ENCODE measurements at regions of chr5 and their contacts with region 1.

Region 1: DNA sequence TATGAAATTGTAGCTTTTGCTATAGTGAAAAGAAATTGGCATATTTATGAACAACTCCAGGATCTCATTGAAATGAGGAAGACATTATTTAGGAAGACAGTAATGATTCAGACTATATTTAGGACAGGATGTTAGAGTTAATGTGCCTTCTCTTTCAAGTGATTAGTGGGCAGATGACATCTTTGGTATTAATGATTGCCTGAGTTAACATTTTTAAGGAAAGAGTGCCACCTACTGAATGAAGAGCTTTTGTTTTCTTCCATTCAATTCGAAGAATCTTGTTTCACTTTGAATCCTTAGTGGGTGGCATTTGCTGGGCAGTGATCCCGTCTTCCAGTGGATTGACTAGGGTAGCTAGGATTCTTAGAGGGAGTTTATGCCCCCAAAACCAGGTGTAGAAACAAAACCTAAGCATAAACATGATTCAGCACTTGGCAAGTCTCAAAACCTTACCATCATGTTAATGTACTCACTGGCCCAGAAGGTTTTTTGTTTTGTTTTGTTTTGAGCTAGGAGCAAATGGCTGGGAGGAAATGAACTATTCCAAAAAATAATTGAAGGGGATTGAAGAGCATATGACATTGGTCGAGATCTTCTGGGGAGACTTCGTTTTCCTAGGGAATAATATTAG is 23.2 kb downstream of the MAP3K1 start:
- DNase-seq: no peak
- ATAC-seq: peak; percentile 67
- H3K4me3 Mint-ChIP-seq: peak overlapping the region; percentile 37
- H3K27ac Mint-ChIP-seq: peak overlapping the region; percentile 68
- H3K4me1 Mint-ChIP-seq: peaks cover 84% of the 10 kb centered on the region
- H3K27me3 Mint-ChIP-seq: no peaks in the 10 kb centered on the region

Region 2: GRCh38 chr5:55969956-55970355 is 868.6 kb before region 1 on chr5:
- CTCF ChIA-PET with region 1: no interaction called
- POLR2A ChIA-PET with region 1: interaction called, 3 read pairs
- intact Hi-C with region 1: loop called in 1 of 2 experiments (anchors 10 kb)
- DNase-seq: no peak
- ATAC-seq: no peak
- H3K4me3 Mint-ChIP-seq: no peak overlapping the region
- H3K27ac Mint-ChIP-seq: peak overlapping the region; percentile 88
- H3K4me1 Mint-ChIP-seq: peaks cover 67% of the 10 kb centered on the region
- H3K27me3 Mint-ChIP-seq: no peaks in the 10 kb centered on the region

Region 3: DNA sequence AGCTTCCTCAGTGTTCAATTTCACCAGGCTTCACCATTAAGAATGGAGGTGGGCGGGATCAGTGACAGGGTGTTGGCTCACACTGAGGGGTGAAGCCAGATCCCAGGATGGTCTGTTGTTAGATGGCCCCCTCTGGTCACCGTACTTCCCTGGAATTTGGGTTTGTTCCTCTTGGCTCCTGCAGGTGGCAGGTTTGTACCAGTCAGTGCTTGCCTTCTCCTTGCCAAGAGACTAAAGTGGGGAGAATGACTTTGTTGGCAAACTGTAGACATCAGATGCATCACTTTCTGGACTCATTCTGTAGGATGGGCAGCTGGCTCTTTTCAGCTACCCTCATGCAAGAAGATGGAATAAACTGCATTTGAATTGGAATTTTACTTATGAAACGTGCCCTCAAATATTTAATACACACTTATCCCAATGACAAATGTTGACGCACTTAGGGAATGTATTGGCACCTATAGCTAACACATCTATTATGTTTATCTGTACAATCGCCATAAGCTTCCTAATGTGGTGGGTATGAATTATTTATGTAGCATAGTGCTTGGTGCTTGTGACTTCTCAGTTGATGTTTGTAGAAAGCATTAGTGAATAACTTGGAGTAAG is 574.0 kb before region 1 on chr5:
- CTCF ChIA-PET with region 1: interaction called, 127 read pairs
- POLR2A ChIA-PET with region 1: no interaction called
- intact Hi-C with region 1: no loop called
- DNase-seq: peak; percentile 51
- ATAC-seq: peak; percentile 42
- H3K4me3 Mint-ChIP-seq: no peak overlapping the region
- H3K27ac Mint-ChIP-seq: no peak overlapping the region
- H3K4me1 Mint-ChIP-seq: peaks cover 2% of the 10 kb centered on the region
- H3K27me3 Mint-ChIP-seq: no peaks in the 10 kb centered on the region

Region 4: DNA sequence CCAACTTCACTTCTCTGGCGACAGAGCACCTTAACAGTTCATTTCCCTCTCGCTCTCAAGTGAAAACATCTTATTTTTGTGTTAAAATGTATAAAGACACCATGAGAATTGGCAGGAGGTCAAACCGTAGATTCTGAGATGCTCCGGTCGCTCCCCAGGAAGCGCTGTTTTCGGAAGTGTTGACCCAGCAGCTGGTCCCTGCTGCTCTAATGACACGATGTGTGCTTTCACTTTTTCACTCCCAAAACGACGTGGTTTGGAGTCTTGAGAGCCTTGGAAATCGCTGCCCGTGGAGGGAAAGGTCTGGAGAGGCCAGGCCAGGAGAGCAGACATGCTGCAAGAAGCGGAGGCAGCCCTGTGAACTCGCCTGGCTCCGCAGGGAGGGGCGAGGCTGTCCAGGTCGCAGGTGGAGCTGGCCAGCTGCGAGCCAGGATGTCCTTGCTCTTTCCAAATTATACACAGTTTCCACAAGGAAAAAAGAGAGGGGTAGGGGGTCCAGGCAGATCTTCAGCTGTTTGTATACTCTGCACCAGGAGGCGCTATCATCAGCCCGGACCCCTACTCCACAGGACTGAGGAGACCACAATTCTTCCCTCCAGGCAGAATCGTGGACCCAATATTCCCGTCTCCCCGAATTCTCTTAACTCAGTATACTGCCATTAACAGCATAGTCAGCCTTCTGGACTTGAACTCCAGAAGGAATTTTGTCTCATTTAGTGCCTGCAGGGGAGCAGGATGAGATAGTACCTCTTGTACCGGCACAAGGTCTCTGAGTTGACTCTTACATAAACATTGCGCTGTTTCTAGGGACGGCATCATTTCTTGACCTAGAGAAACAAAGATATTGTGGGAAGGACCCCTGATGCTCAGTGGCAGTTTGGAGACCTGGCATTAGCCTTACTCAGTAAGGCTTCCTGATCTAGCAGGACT is 356.8 kb before region 1 on chr5:
- CTCF ChIA-PET with region 1: interaction called, 16 read pairs
- POLR2A ChIA-PET with region 1: no interaction called
- intact Hi-C with region 1: loop called (anchors 2 to 5 kb)
- DNase-seq: peak; percentile 41
- ATAC-seq: peak; percentile 9
- H3K4me3 Mint-ChIP-seq: peak overlapping the region; percentile 74
- H3K27ac Mint-ChIP-seq: peak overlapping the region; percentile 84
- H3K4me1 Mint-ChIP-seq: peaks cover 41% of the 10 kb centered on the region
- H3K27me3 Mint-ChIP-seq: no peaks in the 10 kb centered on the region

Region 5: GRCh38 chr5:56737002-56737621 is 101.4 kb before region 1 on chr5:
- CTCF ChIA-PET with region 1: interaction called, 10 read pairs
- POLR2A ChIA-PET with region 1: no interaction called
- intact Hi-C with region 1: no loop called
- DNase-seq: peak; percentile 33
- ATAC-seq: peak; percentile 47
- H3K4me3 Mint-ChIP-seq: no peak overlapping the region
- H3K27ac Mint-ChIP-seq: peak overlapping the region; percentile 81
- H3K4me1 Mint-ChIP-seq: peaks cover 35% of the 10 kb centered on the region
- H3K27me3 Mint-ChIP-seq: no peaks in the 10 kb centered on the region

Region 6: DNA sequence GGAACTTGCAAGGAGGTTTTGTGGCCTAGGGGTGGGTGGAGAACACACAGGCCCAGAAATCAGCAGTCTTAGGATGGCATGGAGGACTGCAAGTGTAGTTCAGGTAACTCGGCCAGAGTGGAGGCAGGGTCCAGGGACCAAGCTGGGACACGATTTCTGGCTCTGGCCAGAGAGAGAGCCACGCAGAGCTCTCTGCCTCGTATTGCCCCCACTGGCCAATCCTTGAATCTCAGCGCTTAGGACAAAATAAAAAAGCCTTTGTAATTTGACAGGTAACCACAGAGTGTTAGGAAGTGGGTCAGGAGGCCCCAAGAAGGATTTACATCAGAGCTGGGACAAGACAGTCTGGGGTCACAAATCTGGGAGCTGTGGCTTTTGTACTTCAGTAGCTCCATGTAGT is 11.5 kb before region 1 on chr5:
- CTCF ChIA-PET with region 1: interaction called, 26 read pairs
- POLR2A ChIA-PET with region 1: no interaction called
- intact Hi-C with region 1: no loop called
- DNase-seq: peak; percentile 36
- ATAC-seq: peak; percentile 17
- H3K4me3 Mint-ChIP-seq: no peak overlapping the region
- H3K27ac Mint-ChIP-seq: peak overlapping the region; percentile 85
- H3K4me1 Mint-ChIP-seq: peaks cover 94% of the 10 kb centered on the region
- H3K27me3 Mint-ChIP-seq: no peaks in the 10 kb centered on the region

Region 7: DNA sequence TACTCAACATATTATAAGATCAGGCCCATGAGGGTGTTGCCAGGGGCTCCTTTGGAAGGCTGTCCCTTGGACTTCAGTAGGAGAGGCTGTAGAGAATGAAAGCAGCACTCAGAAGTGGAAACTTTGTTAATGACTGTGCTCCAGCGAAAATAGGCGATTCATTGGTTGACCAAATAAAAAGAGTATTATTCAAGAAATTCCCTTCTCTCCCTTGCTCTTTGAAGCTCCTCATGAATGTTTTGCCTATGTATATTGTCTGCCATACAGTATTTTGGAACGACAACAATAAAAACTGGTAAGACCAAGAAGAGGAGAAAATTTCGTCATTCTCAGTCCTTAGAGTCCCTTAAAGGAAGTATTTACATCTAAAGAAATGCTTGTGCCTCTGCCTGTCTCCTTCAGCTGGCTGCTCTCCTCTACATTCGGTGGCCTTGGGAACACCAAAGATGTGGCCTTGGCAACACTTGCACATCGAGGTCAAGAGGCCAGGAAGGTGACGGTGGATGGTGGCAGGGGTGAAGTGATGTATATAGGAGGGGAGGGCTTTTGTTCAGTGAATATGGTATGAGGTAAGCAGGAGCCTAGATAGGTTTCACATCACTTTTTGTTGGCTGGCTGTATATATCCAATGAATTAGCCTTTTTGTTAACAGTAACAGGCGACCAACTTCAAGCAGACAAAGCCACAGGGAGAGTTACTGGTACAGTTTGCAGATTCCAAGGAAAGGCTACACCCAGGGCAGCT is 739.1 kb after region 1 on chr5:
- CTCF ChIA-PET with region 1: no interaction called
- POLR2A ChIA-PET with region 1: no interaction called
- intact Hi-C with region 1: no loop called
- DNase-seq: no peak
- ATAC-seq: no peak
- H3K4me3 Mint-ChIP-seq: no peak overlapping the region
- H3K27ac Mint-ChIP-seq: no peak overlapping the region
- H3K4me1 Mint-ChIP-seq: no peaks in the 10 kb centered on the region
- H3K27me3 Mint-ChIP-seq: peaks cover 8% of the 10 kb centered on the region

Measured in activated CD4-positive, alpha-beta T cell treated with anti-CD3 and anti-CD28 coated beads for 36 hours (primary cell).